Mammary epithelial cell (primary cell): ENCODE measurements at regions of chr20 and their contacts with region 1.

Region 1: DNA sequence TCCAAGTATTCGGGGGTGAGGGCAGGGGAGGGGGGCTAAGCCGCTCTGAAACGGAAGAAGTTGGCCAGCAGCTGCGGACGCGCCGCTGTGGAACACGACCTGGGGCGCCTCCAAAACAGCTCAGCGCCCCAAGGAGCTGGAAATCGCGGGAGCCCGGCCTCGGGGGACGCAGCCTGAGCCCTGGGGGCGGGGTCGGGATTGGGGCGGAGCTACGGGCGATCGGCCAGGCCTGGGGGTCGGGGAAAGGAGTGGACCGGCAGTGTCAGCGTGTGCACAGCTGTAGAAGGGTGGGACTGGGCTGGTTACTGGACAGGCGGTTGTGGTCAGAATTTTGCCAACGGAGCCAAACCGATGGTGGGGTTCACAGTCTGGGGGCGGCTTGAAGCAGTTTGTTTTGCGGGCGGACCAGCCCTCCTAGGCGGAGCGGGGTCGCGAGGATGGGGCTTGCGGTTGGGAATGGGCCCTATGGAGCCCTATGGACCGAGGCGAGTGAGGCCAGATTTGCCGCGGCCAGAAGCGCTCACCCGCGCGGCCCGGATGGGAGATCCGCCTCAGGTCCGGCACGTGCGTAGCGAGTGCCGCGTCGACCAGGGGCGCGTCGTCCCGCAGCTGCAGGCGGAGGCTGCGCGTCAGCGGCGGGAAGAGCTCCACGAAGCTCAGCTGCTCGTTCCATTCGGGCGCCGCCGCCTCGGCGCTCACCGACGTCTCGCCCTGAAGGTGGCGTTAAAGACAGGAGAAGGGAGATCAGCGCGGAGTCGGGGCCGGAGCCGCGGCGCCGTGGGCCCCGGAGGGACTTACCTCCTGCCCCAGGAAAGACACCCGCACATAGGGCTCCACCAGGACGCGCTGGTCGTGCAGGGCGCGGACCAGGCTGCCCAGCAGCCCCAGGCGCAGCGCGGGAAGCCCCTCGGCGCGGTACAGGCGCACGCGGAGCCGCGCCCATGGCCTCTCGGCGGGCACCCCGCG is 14.3 kb upstream of the SPAG4 start:
- DNase-seq: peak; percentile 76
- H3K4me3 ChIP-seq: peak overlapping the region in 2 of 3 experiments; percentile 40 to 42
- H3K27ac ChIP-seq: no peak overlapping the region
- H3K4me1 ChIP-seq: peaks cover 13% of the 10 kb centered on the region
- H3K27me3 ChIP-seq: peaks cover 6% of the 10 kb centered on the region
- CTCF ChIP-seq: peak; percentile 22 to 55

Region 2: GRCh38 chr20:35478804-35479472 is 122.4 kb before region 1 on chr20:
- CTCF ChIA-PET with region 1: no interaction called
- dilution Hi-C with region 1: loop called (anchors 10 kb)
- in situ Hi-C with region 1: no loop called
- intact Hi-C with region 1: no loop called
- DNase-seq: no peak
- H3K4me3 ChIP-seq: no peak overlapping the region
- H3K27ac ChIP-seq: no peak overlapping the region
- H3K4me1 ChIP-seq: no peaks in the 10 kb centered on the region
- H3K27me3 ChIP-seq: no peaks in the 10 kb centered on the region
- CTCF ChIP-seq: no peak

Region 3: DNA sequence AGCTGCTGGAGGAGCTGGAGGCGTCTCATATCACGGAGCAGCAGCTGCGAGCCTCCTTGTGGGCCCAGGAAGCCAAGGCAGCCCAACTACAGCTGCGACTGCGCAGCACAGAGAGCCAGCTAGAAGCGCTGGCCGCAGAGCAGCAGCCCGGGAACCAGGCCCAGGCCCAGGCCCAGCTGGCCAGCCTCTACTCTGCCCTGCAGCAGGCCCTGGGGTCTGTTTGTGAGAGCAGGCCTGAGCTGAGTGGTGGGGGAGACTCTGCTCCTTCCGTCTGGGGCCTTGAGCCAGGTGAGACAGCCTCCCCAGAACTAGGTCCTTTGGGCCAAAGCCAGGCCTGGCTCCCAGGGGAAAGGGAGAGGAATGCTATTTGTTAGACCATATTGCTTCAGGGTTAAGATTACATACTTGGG is 103.5 kb before region 1 on chr20:
- CTCF ChIA-PET with region 1: no interaction called
- dilution Hi-C with region 1: loop called (anchors 5 kb)
- in situ Hi-C with region 1: no loop called
- intact Hi-C with region 1: no loop called
- DNase-seq: no peak
- H3K4me3 ChIP-seq: no peak overlapping the region
- H3K27ac ChIP-seq: no peak overlapping the region
- H3K4me1 ChIP-seq: no peaks in the 10 kb centered on the region
- H3K27me3 ChIP-seq: no peaks in the 10 kb centered on the region
- CTCF ChIP-seq: no peak

Region 4: DNA sequence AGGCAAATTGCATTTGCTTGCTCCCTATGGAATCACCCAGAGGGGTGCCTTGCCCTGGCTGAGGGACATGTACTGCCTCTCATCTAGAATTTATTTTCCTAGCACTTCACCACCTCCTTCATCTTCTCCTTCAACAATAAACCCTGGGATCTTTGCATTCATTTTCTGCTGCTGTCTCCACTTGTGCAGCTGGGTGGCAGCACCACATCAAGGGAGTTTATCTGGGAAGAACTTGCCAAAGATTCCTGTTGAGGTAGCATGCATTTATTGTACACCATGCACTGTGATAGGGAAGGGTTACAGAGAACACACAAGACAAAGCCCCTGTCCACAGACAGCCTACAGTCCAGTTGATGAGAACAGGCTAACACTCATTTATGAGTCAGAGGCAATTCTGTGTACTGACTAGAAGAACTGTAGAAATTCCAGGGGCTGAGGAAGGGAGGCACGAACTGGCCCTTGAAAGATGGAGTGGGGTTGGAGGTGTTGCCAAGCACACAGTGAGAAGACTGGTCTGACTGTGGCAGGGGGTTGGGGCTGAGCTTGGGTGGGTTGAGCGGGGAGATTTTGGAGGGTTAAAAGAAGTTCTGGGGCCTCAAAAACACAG is 89.4 kb before region 1 on chr20:
- CTCF ChIA-PET with region 1: no interaction called
- dilution Hi-C with region 1: no loop called
- in situ Hi-C with region 1: no loop called
- intact Hi-C with region 1: loop called (anchors 5 kb)
- DNase-seq: peak; percentile 15
- H3K4me3 ChIP-seq: no peak overlapping the region
- H3K27ac ChIP-seq: no peak overlapping the region
- H3K4me1 ChIP-seq: peaks cover 18% of the 10 kb centered on the region
- H3K27me3 ChIP-seq: no peaks in the 10 kb centered on the region
- CTCF ChIP-seq: peak; percentile 49 to 69

Region 5: GRCh38 chr20:35637276-35637675 is 36.0 kb after region 1 on chr20:
- CTCF ChIA-PET with region 1: no interaction called
- dilution Hi-C with region 1: loop called (anchors 5 kb)
- in situ Hi-C with region 1: no loop called
- intact Hi-C with region 1: no loop called
- DNase-seq: no peak
- H3K4me3 ChIP-seq: no peak overlapping the region
- H3K27ac ChIP-seq: no peak overlapping the region
- H3K4me1 ChIP-seq: no peaks in the 10 kb centered on the region
- H3K27me3 ChIP-seq: no peaks in the 10 kb centered on the region
- CTCF ChIP-seq: no peak

Region 6: DNA sequence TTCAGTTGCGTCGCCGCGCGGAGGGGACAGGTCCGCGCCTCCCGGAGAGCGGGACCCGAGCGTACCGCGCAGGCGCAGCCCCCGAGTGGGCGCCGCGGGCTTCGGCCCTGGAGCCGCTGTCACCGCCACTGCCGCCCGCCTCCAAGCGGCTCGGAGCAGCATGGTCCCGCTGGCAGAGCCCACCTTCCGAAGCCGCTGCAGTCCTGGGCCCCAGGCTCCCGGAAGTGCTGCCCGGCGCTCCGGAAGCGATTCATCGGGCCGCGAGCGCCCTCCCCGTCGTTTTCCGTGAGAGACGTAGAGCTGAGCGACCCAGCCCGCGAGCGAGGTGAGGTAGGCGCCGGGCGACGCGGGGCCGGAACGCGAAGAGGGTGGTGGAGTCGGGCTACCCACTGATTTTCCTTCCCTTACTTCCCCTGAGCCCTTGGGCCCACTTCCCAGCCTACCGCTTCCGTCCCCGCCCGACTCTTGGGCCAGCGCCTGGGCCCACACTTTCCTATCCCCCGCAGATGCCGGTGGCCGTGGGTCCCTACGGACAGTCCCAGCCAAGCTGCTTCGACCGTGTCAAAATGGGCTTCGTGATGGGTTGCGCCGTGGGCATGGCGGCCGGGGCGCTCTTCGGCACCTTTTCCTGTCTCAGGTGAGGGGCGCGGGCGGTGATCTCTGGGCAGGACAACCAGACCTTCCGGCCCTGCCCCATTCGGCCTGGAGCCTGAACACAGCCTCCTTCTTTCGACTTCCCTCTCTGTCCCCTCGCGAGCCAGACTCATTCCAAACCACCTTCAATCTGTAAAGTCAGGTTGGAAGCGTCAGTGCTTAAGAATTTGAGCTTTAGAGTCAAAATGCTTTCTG is 98.1 kb after region 1 on chr20 and contains the starts of genes NFS1 and ROMO1:
- CTCF ChIA-PET with region 1: no interaction called
- dilution Hi-C with region 1: no loop called
- in situ Hi-C with region 1: no loop called
- intact Hi-C with region 1: loop called (anchors 2 kb)
- DNase-seq: peak; percentile 78
- H3K4me3 ChIP-seq: peak within 1 kb of the TSS; percentile 58 to 94 (median 81)
- H3K27ac ChIP-seq: peak within 1 kb of the TSS; percentile 78
- H3K4me1 ChIP-seq: peaks cover 17% of the 10 kb centered on the region
- H3K27me3 ChIP-seq: no peaks in the 10 kb centered on the region
- CTCF ChIP-seq: peak in 1 of 2 donors; percentile 29
- total RNA-seq, gene NFS1: 28.8 to 33.0 TPM
- total RNA-seq, gene ROMO1: 113 to 176 TPM

Region 7: GRCh38 chr20:36183155-36183944 is 582.1 kb after region 1 on chr20:
- CTCF ChIA-PET with region 1: no interaction called
- dilution Hi-C with region 1: no loop called
- in situ Hi-C with region 1: no loop called
- intact Hi-C with region 1: no loop called
- DNase-seq: no peak
- H3K4me3 ChIP-seq: no peak overlapping the region
- H3K27ac ChIP-seq: no peak overlapping the region
- H3K4me1 ChIP-seq: no peaks in the 10 kb centered on the region
- H3K27me3 ChIP-seq: no peaks in the 10 kb centered on the region
- CTCF ChIP-seq: no peak